ENCODE measurements at regions of chr9 and their contacts with region 1.

Region 1: DNA sequence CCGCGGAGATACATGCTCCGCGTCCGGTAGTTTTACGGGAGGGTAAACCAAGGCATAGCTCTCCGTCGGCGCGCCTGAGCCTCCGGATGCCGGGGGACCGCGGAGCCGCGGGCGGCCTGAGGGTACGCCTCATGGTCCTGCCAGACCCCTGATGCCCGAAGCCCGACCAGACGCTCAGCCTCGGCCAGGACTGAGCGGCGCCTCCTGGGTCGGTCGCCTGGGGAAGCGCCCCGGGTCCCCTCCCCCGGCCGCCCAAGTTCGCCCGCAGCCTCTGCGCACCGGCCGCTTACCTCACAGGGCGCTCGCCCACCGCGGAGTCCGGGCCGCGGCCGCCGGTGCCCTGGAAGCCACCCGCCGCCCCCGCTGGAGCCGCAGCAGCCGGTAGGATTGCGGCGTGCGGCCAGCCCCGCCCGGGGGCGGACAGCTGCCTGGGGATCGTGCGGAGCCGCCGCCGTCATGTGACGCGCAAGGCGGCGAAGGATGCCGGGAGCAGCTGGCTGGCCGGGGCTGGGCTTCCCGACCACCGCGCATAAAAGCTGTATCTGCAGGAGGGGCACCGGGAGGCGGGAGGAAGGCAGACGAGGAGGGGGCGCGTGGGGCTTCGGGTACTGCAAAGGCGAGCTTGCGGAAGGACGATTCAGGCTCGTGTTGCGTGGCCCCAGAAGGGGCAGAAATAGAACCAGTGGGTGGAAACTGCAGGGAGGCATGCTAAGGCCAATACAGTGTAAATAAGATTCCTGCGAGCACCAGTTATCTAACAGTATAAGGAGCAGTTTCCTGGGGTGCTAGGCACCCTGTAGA is at the start of gene FBXO10:
- DNase-seq: peak; percentile 57
- H3K4me3 ChIP-seq: peak within 1 kb of the TSS; percentile 77 to 84 (median 81)
- H3K27ac ChIP-seq: peak within 1 kb of the TSS; percentile 46
- H3K4me1 ChIP-seq: peaks cover 11% of the 10 kb centered on the region
- H3K27me3 ChIP-seq: no peaks in the 10 kb centered on the region
- CTCF ChIP-seq: no peak
- total RNA-seq, gene FBXO10: 3.7 to 11.8 TPM

Region 2: GRCh38 chr9:37676411-37676830 is 100.3 kb after region 1 on chr9:
- CTCF ChIA-PET with region 1: no interaction called
- dilution Hi-C with region 1: loop called (anchors 5 kb)
- in situ Hi-C with region 1: no loop called
- intact Hi-C with region 1: no loop called
- DNase-seq: no peak
- H3K4me3 ChIP-seq: no peak overlapping the region
- H3K27ac ChIP-seq: no peak overlapping the region
- H3K4me1 ChIP-seq: no peaks in the 10 kb centered on the region
- H3K27me3 ChIP-seq: peaks cover 5% of the 10 kb centered on the region
- CTCF ChIP-seq: no peak

Region 3: DNA sequence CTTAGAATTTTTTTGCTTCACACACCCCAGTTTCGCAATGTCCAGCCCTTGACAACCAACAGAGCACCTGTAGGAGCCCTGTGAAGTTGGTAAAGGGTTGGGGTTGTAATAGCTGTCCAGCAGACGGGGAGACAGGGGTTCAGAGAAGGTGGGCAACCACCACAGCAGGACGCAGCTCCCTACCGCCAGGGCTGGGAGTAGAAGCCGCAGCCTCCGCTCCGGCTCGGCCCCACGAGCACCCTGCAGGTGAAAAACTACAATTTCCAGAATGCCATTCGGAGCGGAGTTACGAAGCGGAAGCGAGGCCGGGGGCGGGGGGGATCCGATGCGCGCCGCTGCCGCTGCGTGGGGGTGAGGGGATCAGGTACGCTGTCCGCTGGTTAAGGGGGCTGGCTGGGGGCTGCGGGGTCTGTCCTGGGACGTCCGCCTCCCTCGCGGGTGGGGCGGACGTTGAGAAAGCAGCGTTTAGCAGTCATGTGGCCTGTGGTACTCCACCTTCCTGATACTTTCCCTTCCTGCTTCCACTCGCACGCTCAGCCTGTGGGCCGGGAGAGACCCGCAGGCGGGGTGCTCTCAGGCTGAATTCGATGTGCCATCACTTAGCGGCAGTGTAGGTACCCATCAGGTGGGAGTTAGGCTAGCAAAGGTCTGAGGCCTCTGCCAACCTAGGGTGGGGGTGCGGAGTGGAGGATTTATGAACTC is 177.5 kb after region 1 on chr9 and contains the start of gene TRMT10B:
- CTCF ChIA-PET with region 1: no interaction called
- dilution Hi-C with region 1: no loop called
- in situ Hi-C with region 1: loop called in 1 of 2 experiments (anchors 25 kb)
- intact Hi-C with region 1: loop called (anchors 2 kb)
- DNase-seq: peak; percentile 67
- H3K4me3 ChIP-seq: peak within 1 kb of the TSS; percentile 60 to 74 (median 64)
- H3K27ac ChIP-seq: peak within 1 kb of the TSS; percentile 55
- H3K4me1 ChIP-seq: peaks cover 6% of the 10 kb centered on the region
- H3K27me3 ChIP-seq: no peaks in the 10 kb centered on the region
- CTCF ChIP-seq: no peak
- total RNA-seq, gene TRMT10B: 2.7 to 7.5 TPM